CD8-positive, alpha-beta T cell (primary cell): ENCODE measurements at regions of chr5 and their contacts with region 1.

Region 1: GRCh38 chr5:172697123-172698121 is 56.4 kb downstream of the NEURL1B start:
- DNase-seq: peak; percentile 67 to 92 (median 84)
- ATAC-seq: peak; percentile 98
- H3K4me3 ChIP-seq: peak overlapping the region; percentile 64 to 90
- H3K4me3 Mint-ChIP-seq: peak overlapping the region; percentile 93
- H3K27ac ChIP-seq: peak overlapping the region; percentile 43 to 81
- H3K27ac Mint-ChIP-seq: peak overlapping the region; percentile 92
- H3K4me1 ChIP-seq: peaks cover 10% of the 10 kb centered on the region
- H3K4me1 Mint-ChIP-seq: peaks cover 22% of the 10 kb centered on the region
- H3K27me3 ChIP-seq: peaks cover 0 to 3% of the 10 kb centered on the region in 2 experiments
- H3K27me3 Mint-ChIP-seq: peaks cover 16% of the 10 kb centered on the region
- CTCF ChIP-seq: peak; percentile 81

Region 2: GRCh38 chr5:171913987-171914273 is 783.5 kb before region 1 on chr5:
- CTCF ChIA-PET with region 1: no interaction called
- POLR2A ChIA-PET with region 1: no interaction called
- intact Hi-C with region 1: loop called in 1 of 2 experiments (anchors 5 kb)
- DNase-seq: no peak
- ATAC-seq: no peak
- H3K4me3 ChIP-seq: no peak overlapping the region
- H3K4me3 Mint-ChIP-seq: no peak overlapping the region
- H3K27ac ChIP-seq: no peak overlapping the region
- H3K27ac Mint-ChIP-seq: peak overlapping the region; percentile 7
- H3K4me1 ChIP-seq: peaks cover 9% of the 10 kb centered on the region
- H3K4me1 Mint-ChIP-seq: peaks cover 45% of the 10 kb centered on the region
- H3K27me3 ChIP-seq: no peaks in the 10 kb centered on the region
- H3K27me3 Mint-ChIP-seq: no peaks in the 10 kb centered on the region
- CTCF ChIP-seq: no peak

Region 3: GRCh38 chr5:172469697-172470096 is 227.7 kb before region 1 on chr5:
- CTCF ChIA-PET with region 1: interaction called, 15 read pairs
- POLR2A ChIA-PET with region 1: no interaction called
- intact Hi-C with region 1: no loop called
- DNase-seq: no peak
- ATAC-seq: no peak
- H3K4me3 ChIP-seq: no peak overlapping the region
- H3K4me3 Mint-ChIP-seq: no peak overlapping the region
- H3K27ac ChIP-seq: no peak overlapping the region
- H3K27ac Mint-ChIP-seq: no peak overlapping the region
- H3K4me1 ChIP-seq: no peaks in the 10 kb centered on the region
- H3K4me1 Mint-ChIP-seq: no peaks in the 10 kb centered on the region
- H3K27me3 ChIP-seq: no peaks in the 10 kb centered on the region
- H3K27me3 Mint-ChIP-seq: peaks cover 13% of the 10 kb centered on the region
- CTCF ChIP-seq: no peak

Region 4: GRCh38 chr5:172666251-172666650 is 31.2 kb before region 1 on chr5:
- CTCF ChIA-PET with region 1: interaction called, 6 read pairs
- POLR2A ChIA-PET with region 1: no interaction called
- intact Hi-C with region 1: loop called in 1 of 2 experiments (anchors 1 kb)
- DNase-seq: no peak
- ATAC-seq: no peak
- H3K4me3 ChIP-seq: no peak overlapping the region
- H3K4me3 Mint-ChIP-seq: no peak overlapping the region
- H3K27ac ChIP-seq: no peak overlapping the region
- H3K27ac Mint-ChIP-seq: no peak overlapping the region
- H3K4me1 ChIP-seq: no peaks in the 10 kb centered on the region
- H3K4me1 Mint-ChIP-seq: no peaks in the 10 kb centered on the region
- H3K27me3 ChIP-seq: no peaks in the 10 kb centered on the region
- H3K27me3 Mint-ChIP-seq: no peaks in the 10 kb centered on the region
- CTCF ChIP-seq: no peak

Region 5: GRCh38 chr5:172868924-172869591 is 171.6 kb after region 1 on chr5:
- CTCF ChIA-PET with region 1: no interaction called
- POLR2A ChIA-PET with region 1: no interaction called
- intact Hi-C with region 1: no loop called
- DNase-seq: no peak
- ATAC-seq: no peak
- H3K4me3 ChIP-seq: no peak overlapping the region
- H3K4me3 Mint-ChIP-seq: no peak overlapping the region
- H3K27ac ChIP-seq: no peak overlapping the region
- H3K27ac Mint-ChIP-seq: no peak overlapping the region
- H3K4me1 ChIP-seq: peaks cover 12% of the 10 kb centered on the region
- H3K4me1 Mint-ChIP-seq: peaks cover 36% of the 10 kb centered on the region
- H3K27me3 ChIP-seq: no peaks in the 10 kb centered on the region
- H3K27me3 Mint-ChIP-seq: no peaks in the 10 kb centered on the region
- CTCF ChIP-seq: no peak

Region 6: GRCh38 chr5:172984243-172984953 is 287.0 kb after region 1 on chr5:
- CTCF ChIA-PET with region 1: no interaction called
- POLR2A ChIA-PET with region 1: no interaction called
- intact Hi-C with region 1: no loop called
- DNase-seq: peak; percentile 52 to 90 (median 76)
- ATAC-seq: peak; percentile 84
- H3K4me3 ChIP-seq: peak overlapping the region; percentile 78 to 100
- H3K4me3 Mint-ChIP-seq: peak overlapping the region; percentile 97
- H3K27ac ChIP-seq: peak overlapping the region; percentile 74 to 99
- H3K27ac Mint-ChIP-seq: peak overlapping the region; percentile 98
- H3K4me1 ChIP-seq: peaks cover 18% of the 10 kb centered on the region
- H3K4me1 Mint-ChIP-seq: peaks cover 48% of the 10 kb centered on the region
- H3K27me3 ChIP-seq: no peaks in the 10 kb centered on the region
- H3K27me3 Mint-ChIP-seq: no peaks in the 10 kb centered on the region
- CTCF ChIP-seq: peak; percentile 52

Region 7: GRCh38 chr5:173144200-173145176 is 447.1 kb after region 1 on chr5 and contains the start of gene BNIP1:
- CTCF ChIA-PET with region 1: no interaction called
- POLR2A ChIA-PET with region 1: no interaction called
- intact Hi-C with region 1: loop called in 1 of 2 experiments (anchors 10 kb)
- DNase-seq: peak; percentile 91 to 98 (median 97)
- ATAC-seq: peak; percentile 94
- H3K4me3 ChIP-seq: peak within 1 kb of the TSS; percentile 74 to 99
- H3K4me3 Mint-ChIP-seq: peak within 1 kb of the TSS; percentile 99
- H3K27ac ChIP-seq: peak within 1 kb of the TSS; percentile 95 to 98
- H3K27ac Mint-ChIP-seq: peak within 1 kb of the TSS; percentile 99
- H3K4me1 ChIP-seq: peaks cover 10% of the 10 kb centered on the region
- H3K4me1 Mint-ChIP-seq: peaks cover 11% of the 10 kb centered on the region
- H3K27me3 ChIP-seq: no peaks in the 10 kb centered on the region
- H3K27me3 Mint-ChIP-seq: no peaks in the 10 kb centered on the region
- CTCF ChIP-seq: peak; percentile 68
- total RNA-seq, gene BNIP1: 22.7 to 24.0 TPM